ENCODE measurements at regions of chr5 and their contacts with region 1.

Region 1: DNA sequence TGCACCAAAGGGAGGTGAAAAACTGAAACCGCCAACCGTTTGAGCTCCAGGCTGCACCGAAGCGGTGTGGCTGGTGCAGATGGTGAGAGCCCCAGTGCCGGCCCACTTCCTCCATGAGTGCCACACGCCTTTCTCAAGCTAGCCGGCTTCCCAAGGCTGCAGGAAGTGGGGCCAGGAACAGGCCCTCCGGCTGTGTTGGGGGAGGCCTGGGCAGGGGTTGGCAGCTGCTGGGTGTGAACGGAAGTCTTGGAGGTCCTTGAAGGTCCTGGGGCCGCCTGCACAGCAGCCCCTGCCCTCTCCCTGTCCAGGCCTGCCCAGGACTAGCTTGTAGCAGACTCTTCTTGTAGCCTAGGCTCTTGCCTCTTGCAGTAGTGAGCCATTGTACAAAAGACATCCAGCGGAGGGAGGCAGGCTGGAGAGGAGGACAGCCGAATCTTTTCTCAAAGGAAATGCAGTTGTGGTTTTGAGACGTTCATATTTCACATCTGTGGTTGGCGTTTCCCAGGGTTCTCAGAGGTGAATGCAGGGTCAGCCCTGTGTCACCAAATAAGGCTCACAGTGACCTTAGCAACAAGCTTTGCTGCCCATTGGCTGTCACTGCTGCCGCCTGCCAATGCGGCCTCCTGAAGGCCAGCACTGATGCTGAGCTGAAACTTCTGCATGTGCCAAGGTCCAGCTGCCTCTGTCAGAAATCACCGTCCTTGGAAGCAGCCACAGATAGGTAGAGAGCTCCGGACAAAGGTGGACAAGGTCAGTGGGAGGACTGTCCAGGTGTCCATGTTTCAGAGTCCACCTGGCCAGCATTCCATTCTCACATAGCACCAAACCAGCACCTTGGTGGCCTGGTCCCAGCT is 23.9 kb downstream of the IRF1 start:
- DNase-seq: no peak
- H3K4me3 ChIP-seq: no peak overlapping the region
- H3K27ac ChIP-seq: no peak overlapping the region
- H3K4me1 ChIP-seq: peaks cover 6 to 19% (median 11%) of the 10 kb centered on the region in 4 experiments
- H3K27me3 ChIP-seq: no peaks in the 10 kb centered on the region
- CTCF ChIP-seq: no peak
- EP300 ChIP-seq: peak in 1 of 2 experiments; percentile 7; a peak in 1 of 3 replicates
- POLR2A ChIP-seq: no peak
- RAD21 ChIP-seq: no peak

Region 2: GRCh38 chr5:132180134-132180745 is 286.4 kb before region 1 on chr5:
- CTCF ChIA-PET with region 1: no interaction called
- POLR2A ChIA-PET with region 1: no interaction called
- DNase-seq: no peak
- H3K4me3 ChIP-seq: no peak overlapping the region
- H3K27ac ChIP-seq: no peak overlapping the region
- H3K4me1 ChIP-seq: peaks cover 0 to 7% (median 4%) of the 10 kb centered on the region in 4 experiments; a peak in 6 of 7 replicates
- H3K27me3 ChIP-seq: no peaks in the 10 kb centered on the region; a peak in 2 of 7 replicates
- CTCF ChIP-seq: peak in 2 of 3 experiments; percentile 73 to 76; a peak in 3 of 4 replicates
- EP300 ChIP-seq: no peak
- POLR2A ChIP-seq: no peak
- RAD21 ChIP-seq: peak; percentile 69 to 79

Region 3: DNA sequence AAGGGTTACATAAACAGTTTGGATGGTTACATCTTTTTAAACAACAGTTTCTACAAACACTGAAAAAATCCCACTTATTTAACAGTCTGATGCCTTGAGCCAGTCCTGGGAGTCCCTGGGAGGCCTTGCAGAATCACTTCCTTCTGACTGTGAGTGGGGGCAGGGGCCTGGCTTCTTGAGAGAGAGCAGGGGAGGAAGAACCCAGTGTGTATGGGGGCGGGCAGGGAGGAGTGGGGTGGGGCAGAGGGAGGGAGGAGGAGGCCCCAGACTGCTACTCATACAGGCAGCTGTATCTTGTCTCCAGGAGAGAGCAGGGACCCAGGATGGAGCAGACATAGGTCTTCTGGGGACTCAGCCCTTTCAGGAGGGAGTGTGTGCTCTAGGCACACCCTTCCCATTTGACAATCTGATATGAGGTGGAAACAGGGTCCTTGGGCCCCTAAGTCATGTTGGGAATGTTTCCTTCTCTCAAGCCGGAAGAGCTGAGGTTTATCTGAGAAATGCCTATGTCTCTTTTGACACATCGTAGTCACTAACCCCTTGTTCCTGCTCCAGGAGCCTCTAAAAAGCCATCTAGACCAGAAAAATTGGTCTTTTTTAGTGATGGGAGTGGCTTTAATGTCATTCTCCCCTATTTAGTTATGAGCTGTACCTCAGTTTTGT is 28.9 kb before region 1 on chr5:
- CTCF ChIA-PET with region 1: interaction called, 11 read pairs
- POLR2A ChIA-PET with region 1: no interaction called
- DNase-seq: no peak
- H3K4me3 ChIP-seq: no peak overlapping the region
- H3K27ac ChIP-seq: no peak overlapping the region
- H3K4me1 ChIP-seq: peaks cover 0 to 7% (median 4%) of the 10 kb centered on the region in 4 experiments; a peak in 3 of 7 replicates
- H3K27me3 ChIP-seq: no peaks in the 10 kb centered on the region; a peak in 1 of 7 replicates
- CTCF ChIP-seq: no peak
- EP300 ChIP-seq: no peak
- POLR2A ChIP-seq: no peak
- RAD21 ChIP-seq: no peak

Region 4: GRCh38 chr5:132446669-132447068 is 20.0 kb before region 1 on chr5:
- CTCF ChIA-PET with region 1: interaction called, 13 read pairs
- POLR2A ChIA-PET with region 1: no interaction called
- DNase-seq: no peak
- H3K4me3 ChIP-seq: no peak overlapping the region
- H3K27ac ChIP-seq: no peak overlapping the region
- H3K4me1 ChIP-seq: peaks cover 8 to 16% (median 12%) of the 10 kb centered on the region in 4 experiments
- H3K27me3 ChIP-seq: no peaks in the 10 kb centered on the region
- CTCF ChIP-seq: no peak
- EP300 ChIP-seq: no peak
- POLR2A ChIP-seq: no peak
- RAD21 ChIP-seq: no peak

Region 5: GRCh38 chr5:132456296-132457001 is 10.2 kb before region 1 on chr5:
- CTCF ChIA-PET with region 1: interaction called, 33 read pairs
- POLR2A ChIA-PET with region 1: interaction called, 8 read pairs
- DNase-seq: no peak
- H3K4me3 ChIP-seq: no peak overlapping the region
- H3K27ac ChIP-seq: no peak overlapping the region
- H3K4me1 ChIP-seq: peaks cover 1 to 17% (median 5%) of the 10 kb centered on the region in 4 experiments; a peak in 6 of 7 replicates
- H3K27me3 ChIP-seq: peaks cover 0 to 1% (median 0%) of the 10 kb centered on the region in 4 experiments; a peak in 1 of 7 replicates
- CTCF ChIP-seq: no peak
- EP300 ChIP-seq: no peak
- POLR2A ChIP-seq: no peak
- RAD21 ChIP-seq: no peak

Measured in H1 (cell line).